Endothelial cell of umbilical vein (primary cell): ENCODE measurements at regions of chr13 and their contacts with region 1.

Region 1: DNA sequence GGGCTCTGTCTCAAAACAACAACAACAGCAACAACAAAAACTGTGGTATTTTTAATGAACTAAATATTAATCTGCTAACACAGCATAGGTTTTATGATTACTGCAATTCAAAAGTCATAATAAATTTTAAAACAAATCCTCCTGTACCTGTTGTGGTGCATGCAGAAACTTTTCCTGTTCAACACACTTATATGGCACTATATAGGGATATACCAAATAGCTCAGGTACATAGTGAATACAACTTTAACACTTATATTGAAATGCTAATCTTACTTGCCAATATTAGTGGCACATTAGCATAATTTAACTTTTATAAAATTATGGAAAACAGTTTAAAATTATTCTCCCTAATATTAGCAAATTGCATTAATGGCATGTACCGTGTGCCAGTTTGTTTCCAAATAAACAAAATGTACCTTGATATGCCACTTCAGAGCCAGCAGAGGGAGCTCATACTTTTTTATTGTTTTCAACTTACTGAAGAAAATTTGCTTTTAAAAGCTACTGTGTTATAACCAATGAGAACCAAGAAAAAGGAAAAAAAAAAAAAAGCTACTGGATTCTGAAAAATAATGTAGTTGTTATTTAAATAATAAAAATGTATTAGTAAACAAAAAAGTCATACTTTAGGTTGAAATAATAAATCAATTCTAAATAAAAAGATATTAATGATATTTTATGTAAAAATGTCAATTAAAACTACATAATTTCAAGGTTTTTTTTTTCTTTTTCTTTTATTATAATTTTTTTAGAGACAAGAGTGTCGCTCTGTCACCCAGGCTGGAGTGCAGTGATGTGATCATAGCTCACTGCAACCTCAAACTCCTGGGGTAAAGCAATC is 18.0 kb upstream of the RBM26 start:
- DNase-seq: peak; percentile 53
- H3K4me3 ChIP-seq: no peak overlapping the region
- H3K27ac ChIP-seq: no peak overlapping the region
- H3K4me1 ChIP-seq: no peaks in the 10 kb centered on the region
- H3K27me3 ChIP-seq: no peaks in the 10 kb centered on the region
- CTCF ChIP-seq: peak; percentile 30 to 39
- POLR2A ChIP-seq: no peak

Region 2: DNA sequence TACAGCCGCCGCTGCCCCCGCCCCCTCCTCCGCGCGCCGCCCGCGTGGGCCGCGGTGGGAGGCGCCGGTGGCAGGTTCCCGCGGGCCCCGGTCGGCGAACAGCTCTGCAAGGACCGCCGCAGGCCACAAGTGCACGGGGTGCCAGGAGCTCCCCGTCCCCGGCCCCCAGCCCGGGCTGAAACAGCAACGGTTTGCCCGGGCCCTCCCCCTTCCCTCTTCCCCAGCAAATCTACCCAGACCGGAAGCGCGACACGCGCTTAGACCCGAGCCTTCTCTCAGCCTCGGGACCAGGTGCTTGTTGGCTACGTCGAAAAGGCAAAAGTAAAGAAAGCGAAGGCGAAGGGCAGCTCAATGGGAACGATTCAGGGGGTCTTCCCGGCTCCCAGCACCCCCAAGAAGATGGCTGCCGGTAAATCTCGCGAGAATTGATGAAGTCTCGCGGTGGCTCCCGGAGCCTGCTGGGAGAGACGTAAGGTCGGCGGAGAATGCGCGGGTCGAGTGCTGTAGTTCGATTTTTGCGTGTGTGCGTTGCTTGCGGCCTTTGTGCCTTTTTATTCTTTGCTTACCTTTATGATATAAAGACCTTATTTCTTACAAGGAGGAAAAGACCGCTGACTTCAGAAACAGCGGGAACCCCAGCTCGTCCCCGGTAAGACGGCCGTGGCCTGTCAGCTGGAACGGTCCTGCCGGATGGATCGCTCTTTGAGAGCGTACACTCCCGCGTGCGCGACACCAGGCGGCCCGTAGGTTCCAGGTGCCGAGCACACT is 18.0 kb before region 1 on chr13 and contains the start of gene RBM26:
- CTCF ChIA-PET with region 1: interaction called, 20 read pairs
- POLR2A ChIA-PET with region 1: no interaction called
- dilution Hi-C with region 1: no loop called
- intact Hi-C with region 1: no loop called
- DNase-seq: peak; percentile 95
- H3K4me3 ChIP-seq: peak within 1 kb of the TSS; percentile 89 to 99 (median 99)
- H3K27ac ChIP-seq: peak within 1 kb of the TSS; percentile 90
- H3K4me1 ChIP-seq: peaks cover 40% of the 10 kb centered on the region
- H3K27me3 ChIP-seq: no peaks in the 10 kb centered on the region
- CTCF ChIP-seq: no peak
- POLR2A ChIP-seq: peak; percentile 84
- total RNA-seq, gene RBM26: 43.7 and 54.3 TPM in 2 replicates

Region 3: GRCh38 chr13:79440958-79441528 is 17.0 kb after region 1 on chr13:
- CTCF ChIA-PET with region 1: interaction called, 26 read pairs
- POLR2A ChIA-PET with region 1: no interaction called
- dilution Hi-C with region 1: no loop called
- intact Hi-C with region 1: no loop called
- DNase-seq: no peak
- H3K4me3 ChIP-seq: no peak overlapping the region
- H3K27ac ChIP-seq: no peak overlapping the region
- H3K4me1 ChIP-seq: no peaks in the 10 kb centered on the region
- H3K27me3 ChIP-seq: no peaks in the 10 kb centered on the region
- CTCF ChIP-seq: no peak
- POLR2A ChIP-seq: no peak

Region 4: DNA sequence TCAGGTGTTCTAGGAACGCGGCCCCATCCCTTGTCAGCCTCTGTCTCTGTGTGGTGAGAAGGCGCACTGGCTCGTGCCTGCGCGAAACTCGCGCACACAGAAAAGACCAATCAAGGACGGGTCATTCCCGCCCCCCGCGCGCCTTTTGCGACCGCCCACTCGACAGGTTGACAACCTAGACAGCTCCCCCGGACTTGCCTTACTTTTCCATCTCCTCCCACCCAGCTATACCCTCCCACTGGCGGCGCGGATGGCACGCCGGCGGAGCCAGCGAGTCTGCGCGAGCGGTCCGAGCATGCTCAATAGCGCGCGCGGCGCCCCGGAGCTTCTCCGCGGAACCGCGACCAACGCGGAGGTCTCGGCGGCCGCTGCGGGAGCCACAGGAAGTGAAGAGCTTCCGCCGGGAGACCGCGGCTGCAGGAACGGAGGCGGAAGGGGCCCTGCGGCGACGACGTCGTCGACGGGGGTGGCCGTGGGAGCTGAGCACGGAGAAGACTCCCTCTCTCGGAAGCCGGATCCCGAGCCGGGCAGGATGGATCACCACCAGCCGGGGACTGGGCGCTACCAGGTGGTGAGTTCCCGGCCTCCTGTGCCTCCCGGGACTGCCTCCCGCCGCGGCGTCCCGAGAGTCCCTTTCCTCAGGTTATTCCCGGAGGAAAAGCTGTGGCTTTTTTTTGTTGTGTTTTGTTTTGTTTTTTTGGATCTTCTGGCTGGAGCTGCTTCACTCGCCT is 57.1 kb after region 1 on chr13 and contains the start of gene NDFIP2:
- CTCF ChIA-PET with region 1: interaction called, 68 read pairs
- POLR2A ChIA-PET with region 1: interaction called, 4 read pairs
- dilution Hi-C with region 1: no loop called
- intact Hi-C with region 1: loop called (anchors 1 kb)
- DNase-seq: peak; percentile 85
- H3K4me3 ChIP-seq: peak within 1 kb of the TSS; percentile 90 to 95 (median 93)
- H3K27ac ChIP-seq: peak within 1 kb of the TSS; percentile 23
- H3K4me1 ChIP-seq: peaks cover 9% of the 10 kb centered on the region
- H3K27me3 ChIP-seq: peaks cover 22 to 37% of the 10 kb centered on the region in 2 experiments
- CTCF ChIP-seq: no peak
- POLR2A ChIP-seq: peak; percentile 65
- total RNA-seq, gene NDFIP2: 18.5 and 21.8 TPM in 2 replicates

Region 5: GRCh38 chr13:79522583-79522982 is 98.6 kb after region 1 on chr13:
- CTCF ChIA-PET with region 1: interaction called, 67 read pairs
- POLR2A ChIA-PET with region 1: no interaction called
- dilution Hi-C with region 1: no loop called
- intact Hi-C with region 1: no loop called
- DNase-seq: peak; percentile 44
- H3K4me3 ChIP-seq: no peak overlapping the region
- H3K27ac ChIP-seq: no peak overlapping the region
- H3K4me1 ChIP-seq: peaks cover 27% of the 10 kb centered on the region
- H3K27me3 ChIP-seq: no peaks in the 10 kb centered on the region
- CTCF ChIP-seq: no peak
- POLR2A ChIP-seq: no peak

Region 6: DNA sequence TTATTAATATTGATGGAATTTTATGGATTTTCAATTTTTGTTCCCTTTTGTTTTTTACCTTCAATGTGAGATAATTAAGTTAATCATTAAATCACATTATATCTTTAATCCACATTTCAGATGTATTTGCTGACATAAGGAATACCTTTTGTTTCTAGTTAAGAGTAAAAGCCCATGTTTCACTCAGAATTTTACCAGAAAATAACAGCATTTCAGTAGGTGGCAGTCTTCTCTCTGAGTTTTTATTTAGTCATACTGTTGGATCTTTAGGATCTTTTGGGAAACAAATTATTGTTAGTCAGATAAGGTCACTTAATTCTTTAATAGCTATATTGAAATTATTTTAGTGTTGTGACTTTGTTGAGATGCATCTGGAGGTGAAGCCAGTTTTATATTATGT is 124.9 kb after region 1 on chr13:
- CTCF ChIA-PET with region 1: interaction called, 175 read pairs
- POLR2A ChIA-PET with region 1: no interaction called
- dilution Hi-C with region 1: no loop called
- intact Hi-C with region 1: no loop called
- DNase-seq: peak; percentile 50
- H3K4me3 ChIP-seq: no peak overlapping the region
- H3K27ac ChIP-seq: no peak overlapping the region
- H3K4me1 ChIP-seq: no peaks in the 10 kb centered on the region
- H3K27me3 ChIP-seq: no peaks in the 10 kb centered on the region
- CTCF ChIP-seq: no peak
- POLR2A ChIP-seq: no peak

Region 7: DNA sequence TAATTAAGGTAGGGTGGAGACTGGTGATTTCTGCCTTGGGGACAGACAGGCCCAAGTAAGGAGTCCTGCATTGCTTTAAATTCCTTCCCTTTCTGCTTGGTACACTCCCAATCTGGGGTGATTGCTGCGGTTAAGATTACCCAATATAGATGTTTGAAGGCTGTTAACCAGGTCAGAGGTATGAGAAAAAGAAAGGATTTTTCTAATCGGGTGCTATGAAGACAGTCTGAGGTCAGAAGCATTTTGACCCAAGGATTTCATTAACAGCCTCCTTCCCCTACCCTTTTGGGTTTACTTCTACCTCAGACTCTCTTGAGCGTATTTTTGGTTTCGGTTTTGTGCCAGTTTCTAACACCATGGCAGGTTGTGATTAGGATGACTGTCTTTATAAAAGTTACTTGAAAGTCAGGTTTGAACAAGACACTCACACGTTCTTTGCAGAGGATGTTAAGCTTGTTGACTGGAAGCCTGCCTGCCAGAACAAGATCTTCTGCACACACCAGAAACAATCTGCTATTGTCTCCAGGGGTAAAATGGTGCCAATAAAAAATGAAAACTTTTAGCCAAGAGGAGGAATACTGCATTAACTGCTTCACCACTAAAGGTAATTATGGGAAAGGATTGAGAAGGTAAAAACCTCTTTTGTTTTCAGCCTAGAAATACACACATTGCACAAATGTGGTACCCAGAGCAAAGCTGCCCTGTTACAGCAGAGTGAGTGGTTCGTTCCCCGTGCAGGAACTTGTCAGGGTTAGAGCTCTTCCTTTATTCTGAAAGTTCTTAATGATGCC is 165.8 kb after region 1 on chr13:
- CTCF ChIA-PET with region 1: no interaction called
- POLR2A ChIA-PET with region 1: no interaction called
- dilution Hi-C with region 1: no loop called
- intact Hi-C with region 1: no loop called
- DNase-seq: no peak
- H3K4me3 ChIP-seq: no peak overlapping the region
- H3K27ac ChIP-seq: no peak overlapping the region
- H3K4me1 ChIP-seq: no peaks in the 10 kb centered on the region
- H3K27me3 ChIP-seq: no peaks in the 10 kb centered on the region
- CTCF ChIP-seq: no peak
- POLR2A ChIP-seq: no peak